Activated CD8-positive, alpha-beta T cell treated with anti-CD3 and anti-CD28 coated beads, Interleukin-2, amount 10 ng/mL, durations not matched to agents 7 days and 5 days (primary cell): ENCODE measurements at regions of chr7 and their contacts with region 1.

Region 1: GRCh38 chr7:24896031-24896501 is 83.9 kb downstream of the OSBPL3 start:
- DNase-seq: peak; percentile 65
- ATAC-seq: peak; percentile 65
- H3K4me3 Mint-ChIP-seq: no peak overlapping the region
- H3K27ac Mint-ChIP-seq: peak overlapping the region; percentile 52
- H3K4me1 Mint-ChIP-seq: peaks cover 68% of the 10 kb centered on the region
- H3K27me3 Mint-ChIP-seq: no peaks in the 10 kb centered on the region

Region 2: GRCh38 chr7:24825931-24826661 is 70.0 kb before region 1 on chr7:
- CTCF ChIA-PET with region 1: interaction called, 14 read pairs
- POLR2A ChIA-PET with region 1: interaction called, 4 read pairs
- DNase-seq: peak; percentile 30
- ATAC-seq: peak; percentile 35
- H3K4me3 Mint-ChIP-seq: peak overlapping the region; percentile 57
- H3K27ac Mint-ChIP-seq: peak overlapping the region; percentile 84
- H3K4me1 Mint-ChIP-seq: peaks cover 76% of the 10 kb centered on the region
- H3K27me3 Mint-ChIP-seq: no peaks in the 10 kb centered on the region

Region 3: GRCh38 chr7:24877790-24878311 is 18.2 kb before region 1 on chr7:
- CTCF ChIA-PET with region 1: interaction called, 12 read pairs
- POLR2A ChIA-PET with region 1: no interaction called
- DNase-seq: peak; percentile 28
- ATAC-seq: peak; percentile 55
- H3K4me3 Mint-ChIP-seq: no peak overlapping the region
- H3K27ac Mint-ChIP-seq: peak overlapping the region; percentile 54
- H3K4me1 Mint-ChIP-seq: peaks cover 22% of the 10 kb centered on the region
- H3K27me3 Mint-ChIP-seq: no peaks in the 10 kb centered on the region

Region 4: DNA sequence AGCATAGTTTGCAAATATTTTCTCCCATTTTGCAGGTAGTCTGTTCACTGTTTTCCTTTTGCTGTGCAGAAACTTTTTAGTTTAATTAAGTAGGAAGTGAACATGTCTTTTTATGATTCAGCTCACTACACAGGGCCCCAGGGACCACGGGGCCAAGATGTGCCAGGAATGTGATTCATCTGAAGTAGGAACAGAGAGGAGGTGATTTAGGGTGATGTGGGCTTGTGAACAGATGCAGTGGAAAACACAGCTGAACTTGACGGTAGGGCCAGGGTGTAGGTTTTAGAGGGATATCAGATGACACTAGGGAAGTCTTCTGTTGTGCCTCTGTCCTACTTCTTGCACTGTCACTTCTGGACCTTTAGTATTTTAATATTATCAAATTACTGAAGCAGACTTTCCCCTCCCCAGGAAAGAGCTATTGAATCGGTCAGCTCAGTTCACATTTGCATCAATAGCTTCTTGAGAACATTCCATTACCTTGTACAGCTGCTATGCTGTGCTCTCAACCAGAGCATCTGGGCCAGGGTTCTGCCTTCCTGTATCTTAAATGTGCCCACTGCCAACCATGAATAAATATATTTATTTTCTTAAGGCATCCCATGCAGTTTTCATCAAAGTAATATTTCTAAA is 13.0 kb before region 1 on chr7:
- CTCF ChIA-PET with region 1: interaction called, 12 read pairs
- POLR2A ChIA-PET with region 1: no interaction called
- DNase-seq: no peak
- ATAC-seq: no peak
- H3K4me3 Mint-ChIP-seq: no peak overlapping the region
- H3K27ac Mint-ChIP-seq: peak overlapping the region; percentile 3
- H3K4me1 Mint-ChIP-seq: peaks cover 20% of the 10 kb centered on the region
- H3K27me3 Mint-ChIP-seq: no peaks in the 10 kb centered on the region

Region 5: DNA sequence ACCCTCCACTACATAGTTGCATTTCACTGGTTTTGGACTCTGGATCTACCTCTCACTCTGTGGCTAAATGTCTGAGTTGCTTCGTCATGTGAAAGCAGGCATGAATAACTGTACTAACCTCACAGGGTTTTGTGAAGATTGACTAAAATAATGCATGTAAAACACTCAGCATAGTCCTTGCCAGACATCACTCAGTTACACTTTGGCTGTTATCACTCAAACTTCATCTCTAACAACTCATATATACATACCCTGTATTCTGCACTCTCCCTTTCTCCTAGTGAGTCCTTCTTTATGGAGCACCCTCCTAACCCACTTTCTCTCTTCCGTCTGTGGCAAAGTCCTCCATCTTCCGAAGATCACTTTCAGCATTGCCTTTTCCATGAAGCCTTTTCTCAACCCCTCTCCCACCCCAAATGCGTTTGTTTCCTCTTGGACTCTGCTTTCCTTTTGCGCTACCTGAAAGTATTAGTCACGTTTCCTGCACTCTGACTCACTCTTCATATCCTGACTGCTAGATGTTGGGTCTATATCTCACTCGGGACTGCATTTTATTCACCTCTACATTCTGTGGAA is 11.3 kb after region 1 on chr7:
- CTCF ChIA-PET with region 1: interaction called, 20 read pairs
- POLR2A ChIA-PET with region 1: interaction called, 3 read pairs
- DNase-seq: peak; percentile 55
- ATAC-seq: peak; percentile 71
- H3K4me3 Mint-ChIP-seq: no peak overlapping the region
- H3K27ac Mint-ChIP-seq: no peak overlapping the region
- H3K4me1 Mint-ChIP-seq: peaks cover 41% of the 10 kb centered on the region
- H3K27me3 Mint-ChIP-seq: no peaks in the 10 kb centered on the region